ENCODE measurements at regions of chr16 and their contacts with region 1.

Region 1: GRCh38 chr16:2003827-2004641 is 5.6 kb downstream of the ZNF598 start:
- DNase-seq: peak; percentile 91
- H3K4me3 Mint-ChIP-seq: no peak overlapping the region
- H3K27ac Mint-ChIP-seq: no peak overlapping the region
- H3K4me1 Mint-ChIP-seq: peaks cover 45% of the 10 kb centered on the region
- H3K27me3 Mint-ChIP-seq: no peaks in the 10 kb centered on the region

Region 2: GRCh38 chr16:1991948-1992703 is 11.9 kb before region 1 on chr16:
- CTCF ChIA-PET with region 1: interaction called, 36 read pairs
- POLR2A ChIA-PET with region 1: interaction called, 27 read pairs
- DNase-seq: peak; percentile 98
- H3K4me3 Mint-ChIP-seq: peak overlapping the region; percentile 73
- H3K27ac Mint-ChIP-seq: peak overlapping the region; percentile 35
- H3K4me1 Mint-ChIP-seq: peaks cover 37% of the 10 kb centered on the region
- H3K27me3 Mint-ChIP-seq: peaks cover 14% of the 10 kb centered on the region

Region 3: GRCh38 chr16:2016407-2016922 is 12.4 kb after region 1 on chr16:
- CTCF ChIA-PET with region 1: interaction called, 10 read pairs
- POLR2A ChIA-PET with region 1: no interaction called
- DNase-seq: no peak
- H3K4me3 Mint-ChIP-seq: no peak overlapping the region
- H3K27ac Mint-ChIP-seq: no peak overlapping the region
- H3K4me1 Mint-ChIP-seq: peaks cover 2% of the 10 kb centered on the region
- H3K27me3 Mint-ChIP-seq: peaks cover 19% of the 10 kb centered on the region